Mammary epithelial cell (primary cell): ENCODE measurements at regions of chr17 and their contacts with region 1.

Region 1: DNA sequence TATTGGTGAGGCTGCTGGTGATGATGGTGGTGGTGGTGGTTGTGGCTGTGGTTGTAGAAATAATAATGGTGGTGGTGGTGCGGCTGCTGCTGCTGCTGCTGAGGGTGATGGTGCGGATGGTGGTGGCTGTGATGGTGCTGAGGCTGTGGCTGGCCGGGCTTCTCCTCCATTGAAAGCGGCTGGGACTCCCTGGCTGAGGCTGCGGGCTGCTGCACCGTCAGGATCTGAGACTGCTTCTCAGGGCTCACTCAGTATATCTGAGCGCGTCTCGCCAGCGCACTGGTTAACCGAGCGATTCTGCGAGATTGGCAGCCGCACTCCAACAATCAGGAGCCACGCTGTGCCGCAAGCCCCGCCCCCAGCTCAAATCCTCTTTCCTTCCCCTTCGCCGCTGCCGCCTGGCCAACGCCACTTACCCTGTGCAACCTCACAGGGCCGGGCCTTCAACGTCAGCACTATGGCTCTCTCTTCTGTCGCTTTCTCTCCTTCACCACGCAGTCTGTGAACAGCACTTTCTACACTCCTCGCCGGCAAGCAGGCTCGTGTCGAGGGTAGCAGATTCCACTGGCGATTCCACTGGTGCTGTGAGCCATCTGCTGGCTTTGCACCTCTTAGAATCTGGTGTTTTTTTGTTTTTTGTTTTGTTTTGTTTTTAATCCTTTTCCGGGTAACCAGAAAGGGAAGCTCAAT is at the start of gene NUFIP2:
- DNase-seq: peak; percentile 98
- H3K4me3 ChIP-seq: peak within 1 kb of the TSS; percentile 82 to 95 (median 93)
- H3K27ac ChIP-seq: peak within 1 kb of the TSS; percentile 79
- H3K4me1 ChIP-seq: peaks cover 9% of the 10 kb centered on the region
- H3K27me3 ChIP-seq: no peaks in the 10 kb centered on the region
- CTCF ChIP-seq: no peak
- total RNA-seq, gene NUFIP2: 57.2 to 72.3 TPM

Region 2: DNA sequence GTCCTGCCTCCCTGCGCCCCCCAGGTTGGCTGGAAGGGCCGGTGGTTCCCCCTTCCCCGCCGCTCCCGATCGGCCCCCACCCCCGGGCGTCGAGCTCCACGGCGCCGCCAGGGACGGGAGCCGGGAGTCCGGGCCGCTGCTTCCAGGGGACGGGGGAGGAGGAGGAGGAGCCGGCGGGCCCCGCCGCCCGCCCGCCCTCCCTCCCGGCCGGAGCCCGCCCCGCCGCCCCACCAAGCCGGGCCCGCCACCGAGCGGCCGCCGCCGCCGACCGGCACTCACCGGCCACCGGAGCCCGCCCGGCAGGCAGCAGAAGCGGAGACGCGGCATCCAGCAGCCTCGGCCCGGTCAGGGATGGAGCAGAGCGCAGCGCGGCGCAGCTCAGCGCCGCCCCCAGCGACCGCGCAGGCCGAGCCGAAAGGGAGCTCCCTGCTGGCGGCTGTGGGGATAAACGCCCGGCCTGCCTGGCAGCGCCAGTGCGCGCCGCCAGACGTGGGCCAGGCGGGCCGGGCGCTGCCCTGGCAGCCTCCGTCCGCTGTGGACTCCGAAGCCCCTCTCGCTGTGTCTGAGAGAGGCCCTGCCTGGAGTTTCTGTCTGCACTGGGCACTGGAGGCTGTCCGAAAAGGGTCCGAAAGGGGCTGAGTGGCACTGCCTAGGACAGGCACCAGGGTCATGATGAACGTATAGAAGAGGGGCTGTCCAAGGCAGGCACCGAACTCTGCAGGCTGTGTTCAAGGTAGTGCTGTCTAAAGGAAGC is 113.8 kb before region 1 on chr17 and contains the start of gene MYO18A:
- CTCF ChIA-PET with region 1: no interaction called
- dilution Hi-C with region 1: no loop called
- in situ Hi-C with region 1: no loop called
- intact Hi-C with region 1: loop called (anchors 1 kb)
- DNase-seq: peak; percentile 78
- H3K4me3 ChIP-seq: peak within 1 kb of the TSS; percentile 39 to 66 (median 56)
- H3K27ac ChIP-seq: peak within 1 kb of the TSS; percentile 95
- H3K4me1 ChIP-seq: peaks cover 47% of the 10 kb centered on the region
- H3K27me3 ChIP-seq: no peaks in the 10 kb centered on the region
- CTCF ChIP-seq: peak; percentile 63 to 83
- total RNA-seq, gene MYO18A: 62.3 to 102 TPM

Region 3: GRCh38 chr17:29241015-29241963 is 52.7 kb before region 1 on chr17:
- CTCF ChIA-PET with region 1: no interaction called
- dilution Hi-C with region 1: no loop called
- in situ Hi-C with region 1: no loop called
- intact Hi-C with region 1: loop called (anchors 5 kb)
- DNase-seq: peak; percentile 94
- H3K4me3 ChIP-seq: no peak overlapping the region
- H3K27ac ChIP-seq: peak overlapping the region; percentile 11
- H3K4me1 ChIP-seq: peaks cover 35% of the 10 kb centered on the region
- H3K27me3 ChIP-seq: no peaks in the 10 kb centered on the region
- CTCF ChIP-seq: peak; percentile 2 to 15

Region 4: GRCh38 chr17:29568331-29569244 is 274.6 kb after region 1 on chr17 and contains the start of gene TP53I13:
- CTCF ChIA-PET with region 1: no interaction called
- dilution Hi-C with region 1: no loop called
- in situ Hi-C with region 1: no loop called
- intact Hi-C with region 1: loop called (anchors 2 kb)
- DNase-seq: peak; percentile 74
- H3K4me3 ChIP-seq: peak within 1 kb of the TSS; percentile 71 to 86 (median 74)
- H3K27ac ChIP-seq: peak within 1 kb of the TSS; percentile 10
- H3K4me1 ChIP-seq: peaks cover 27% of the 10 kb centered on the region
- H3K27me3 ChIP-seq: no peaks in the 10 kb centered on the region
- CTCF ChIP-seq: no peak
- total RNA-seq, gene TP53I13: 26.5 to 31.8 TPM